H1 (cell line): ENCODE measurements at regions of chr15 and their contacts with region 1.

Region 1: DNA sequence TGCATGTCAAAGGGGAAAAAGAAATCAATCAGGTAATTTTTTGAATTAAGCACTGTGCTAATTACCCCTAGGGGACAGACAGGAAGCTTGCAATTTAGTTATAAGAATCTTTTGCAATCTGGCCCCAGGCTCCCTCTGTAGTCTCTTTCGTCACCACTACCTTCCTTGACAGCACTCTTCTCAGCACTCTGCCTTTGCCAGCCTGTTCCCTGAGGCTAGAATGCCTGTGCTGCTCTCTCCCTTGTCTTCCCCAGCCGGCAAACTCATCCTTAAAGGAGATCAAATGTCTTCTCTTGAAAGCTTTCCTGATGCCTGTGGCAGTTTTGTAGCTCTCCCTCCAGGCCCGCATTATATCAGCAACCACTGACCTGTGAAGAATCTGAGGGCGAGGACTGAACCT is 32.4 kb upstream of the PRTG start:
- DNase-seq: no peak
- H3K4me3 ChIP-seq: no peak overlapping the region
- H3K27ac ChIP-seq: no peak overlapping the region
- H3K4me1 ChIP-seq: peaks cover 0 to 4% (median 0%) of the 10 kb centered on the region in 4 experiments; a peak in 1 of 7 replicates
- H3K27me3 ChIP-seq: no peaks in the 10 kb centered on the region
- CTCF ChIP-seq: no peak
- EP300 ChIP-seq: no peak
- POLR2A ChIP-seq: no peak
- RAD21 ChIP-seq: 0 out of 4 replicates have a peak, but pooled peaks of 1 of the 2 experiments have one; percentile 5

Region 2: DNA sequence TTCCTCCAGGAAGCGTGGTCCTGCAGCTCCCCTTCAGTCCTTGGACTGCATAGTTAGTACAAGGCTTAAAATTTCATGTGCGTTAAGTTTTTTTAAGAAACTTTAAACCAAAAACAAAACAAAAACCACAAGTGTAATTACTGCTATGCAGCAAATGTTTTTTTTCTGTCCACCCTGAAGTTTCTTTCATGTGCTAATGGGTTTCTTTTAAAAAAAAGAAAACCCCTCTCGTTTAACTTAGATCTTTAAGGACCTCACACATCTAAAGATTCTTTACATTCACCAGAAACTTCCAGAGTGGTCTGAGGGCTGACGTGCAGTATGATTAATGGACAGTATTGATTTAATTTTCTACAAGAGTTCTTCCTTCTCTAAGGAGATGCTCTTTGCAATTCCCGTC is 115.2 kb before region 1 on chr15:
- CTCF ChIA-PET with region 1: interaction called, 10 read pairs
- POLR2A ChIA-PET with region 1: no interaction called
- DNase-seq: no peak
- H3K4me3 ChIP-seq: no peak overlapping the region; a peak in 1 of 8 replicates
- H3K27ac ChIP-seq: no peak overlapping the region
- H3K4me1 ChIP-seq: peaks cover 0 to 10% (median 2%) of the 10 kb centered on the region in 4 experiments; a peak in 2 of 7 replicates
- H3K27me3 ChIP-seq: no peaks in the 10 kb centered on the region
- CTCF ChIP-seq: no peak
- EP300 ChIP-seq: no peak
- POLR2A ChIP-seq: no peak
- RAD21 ChIP-seq: no peak

Region 3: GRCh38 chr15:55742927-55743728 is 32.2 kb before region 1 on chr15 and contains the start of gene PRTG:
- CTCF ChIA-PET with region 1: interaction called, 20 read pairs
- POLR2A ChIA-PET with region 1: no interaction called
- DNase-seq: peak in 1 of 2 experiments; percentile 76
- H3K4me3 ChIP-seq: peak within 1 kb of the TSS; percentile 34 to 78 (median 52)
- H3K27ac ChIP-seq: no peak within 1 kb of the TSS
- H3K4me1 ChIP-seq: peaks cover 0 to 5% (median 2%) of the 10 kb centered on the region in 4 experiments; a peak in 4 of 7 replicates
- H3K27me3 ChIP-seq: peaks cover 63 to 79% (median 75%) of the 10 kb centered on the region in 4 experiments
- CTCF ChIP-seq: no peak
- EP300 ChIP-seq: 0 out of 3 replicates have a peak, but pooled peaks of 1 of the 2 experiments have one; percentile 30
- POLR2A ChIP-seq: peak in 1 of 2 experiments; percentile 40; a peak in 2 of 3 replicates
- RAD21 ChIP-seq: no peak
- total RNA-seq, gene PRTG: 3.2 and 3.4 TPM in 2 replicates

Region 4: GRCh38 chr15:55758580-55758986 is 16.7 kb before region 1 on chr15:
- CTCF ChIA-PET with region 1: interaction called, 57 read pairs
- POLR2A ChIA-PET with region 1: no interaction called
- DNase-seq: no peak
- H3K4me3 ChIP-seq: no peak overlapping the region
- H3K27ac ChIP-seq: no peak overlapping the region
- H3K4me1 ChIP-seq: no peaks in the 10 kb centered on the region
- H3K27me3 ChIP-seq: no peaks in the 10 kb centered on the region
- CTCF ChIP-seq: no peak
- EP300 ChIP-seq: no peak
- POLR2A ChIP-seq: no peak
- RAD21 ChIP-seq: no peak

Region 5: DNA sequence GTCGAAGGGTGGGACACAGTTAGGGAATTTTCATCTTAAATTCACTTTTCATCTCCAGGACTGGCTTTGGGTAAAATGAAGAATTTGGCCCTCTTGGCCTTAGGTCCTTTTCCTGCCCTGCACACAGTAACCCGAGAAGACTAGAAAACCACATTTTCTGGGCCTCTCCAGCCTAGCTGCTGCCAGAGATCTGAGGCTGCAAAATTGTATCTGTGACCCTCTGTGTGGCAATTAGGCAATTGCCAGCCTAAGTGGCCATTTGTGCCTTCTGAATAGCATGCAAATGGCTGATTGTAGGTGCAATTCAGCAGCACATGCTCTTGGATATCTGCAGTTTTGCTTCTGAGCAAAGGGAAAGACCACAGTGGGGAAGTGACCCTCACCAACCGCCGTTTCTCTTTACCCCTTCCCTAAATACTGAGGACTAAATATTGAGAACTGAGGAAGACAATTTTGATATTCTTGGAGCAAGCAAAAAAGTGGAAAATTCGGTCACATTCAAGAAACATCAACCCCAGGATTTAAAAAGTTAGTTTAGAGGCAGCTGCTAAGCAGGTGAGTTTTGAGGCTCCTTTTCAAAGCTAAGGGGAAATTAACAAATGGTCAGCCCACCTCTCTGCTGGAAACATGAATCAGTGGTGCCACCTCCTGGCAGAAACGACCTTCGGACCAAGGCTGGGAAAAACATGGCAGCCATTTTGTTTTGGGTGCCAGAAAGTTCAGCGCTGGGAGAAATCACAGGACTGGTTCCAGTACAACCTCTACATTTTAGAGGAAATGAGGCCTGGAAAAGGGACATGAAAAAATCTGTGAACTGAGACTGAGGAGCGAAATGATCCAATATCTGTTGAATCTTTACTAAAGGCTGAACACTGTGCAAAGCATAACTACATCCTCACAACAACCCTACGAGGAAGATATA is 24.2 kb after region 1 on chr15:
- CTCF ChIA-PET with region 1: interaction called, 62 read pairs
- POLR2A ChIA-PET with region 1: no interaction called
- DNase-seq: peak in 1 of 2 experiments; percentile 84
- H3K4me3 ChIP-seq: no peak overlapping the region
- H3K27ac ChIP-seq: no peak overlapping the region
- H3K4me1 ChIP-seq: peaks cover 0 to 5% (median 2%) of the 10 kb centered on the region in 4 experiments; a peak in 3 of 7 replicates
- H3K27me3 ChIP-seq: no peaks in the 10 kb centered on the region; a peak in 1 of 7 replicates
- CTCF ChIP-seq: peak; percentile 79 to 90 (median 86)
- EP300 ChIP-seq: no peak
- POLR2A ChIP-seq: no peak
- RAD21 ChIP-seq: peak; percentile 94

Region 6: DNA sequence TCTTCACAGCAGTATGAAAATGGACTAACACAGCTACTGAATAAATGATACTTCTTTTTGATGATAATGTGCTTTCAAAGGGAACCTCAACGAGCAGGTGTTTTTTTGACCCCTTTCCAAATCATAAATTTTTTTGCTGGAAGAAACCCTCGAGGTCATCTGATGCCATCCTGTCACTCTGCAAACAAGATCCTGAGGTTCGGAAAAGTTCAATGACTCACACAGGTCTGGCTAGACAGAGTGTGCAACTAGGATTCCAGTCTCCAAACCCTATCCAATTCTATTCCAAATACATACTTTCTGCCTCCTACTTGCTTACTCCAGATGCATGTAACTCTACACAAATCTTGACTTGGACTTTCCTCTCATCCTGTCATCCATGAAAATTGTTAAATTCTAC is 93.4 kb after region 1 on chr15:
- CTCF ChIA-PET with region 1: no interaction called
- POLR2A ChIA-PET with region 1: no interaction called
- DNase-seq: no peak
- H3K4me3 ChIP-seq: no peak overlapping the region
- H3K27ac ChIP-seq: no peak overlapping the region
- H3K4me1 ChIP-seq: no peaks in the 10 kb centered on the region
- H3K27me3 ChIP-seq: no peaks in the 10 kb centered on the region
- CTCF ChIP-seq: no peak
- EP300 ChIP-seq: no peak
- POLR2A ChIP-seq: no peak
- RAD21 ChIP-seq: no peak